ENCODE measurements at regions of chr7 and their contacts with region 1.

Region 1: DNA sequence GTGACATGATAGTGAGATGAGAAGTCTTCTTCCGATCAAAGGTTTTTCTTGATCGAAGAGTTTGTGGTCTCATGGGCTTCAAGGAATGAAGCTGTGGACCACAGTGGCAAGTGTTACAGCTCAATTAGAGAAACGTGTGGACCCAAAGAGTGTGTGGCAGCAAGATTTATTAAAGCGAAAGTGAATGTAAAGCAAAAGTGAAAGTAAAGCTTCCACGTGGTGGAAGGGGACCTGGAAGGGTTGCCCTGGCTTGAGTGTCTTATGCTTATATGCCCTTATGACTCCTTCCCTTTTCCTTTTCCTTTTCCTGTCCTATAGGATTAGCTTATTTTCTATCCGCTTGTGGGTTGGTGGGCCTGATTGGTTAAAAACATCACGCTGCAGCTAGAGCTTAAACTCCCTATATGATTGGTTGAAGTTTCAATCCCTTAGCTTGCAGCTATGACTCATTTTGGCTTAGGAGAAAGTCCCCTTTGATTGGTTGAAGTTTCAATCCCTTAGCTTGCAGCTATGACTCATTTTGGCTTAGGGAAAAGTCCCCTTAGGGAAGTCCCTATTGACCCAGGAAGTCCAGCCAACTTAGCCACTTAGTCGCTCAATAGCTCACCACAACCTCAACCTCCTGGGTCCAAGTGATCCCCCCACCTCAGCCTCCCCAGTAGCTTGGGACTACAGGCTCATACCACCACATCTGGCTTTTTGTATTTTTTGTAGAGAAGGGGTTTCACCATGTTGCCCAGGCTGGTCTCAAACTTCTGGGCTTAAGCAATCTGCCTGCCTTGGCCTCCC is 34.7 kb downstream of the MRPS24 start:
- DNase-seq: no peak
- ATAC-seq: no peak
- H3K4me3 ChIP-seq: peak overlapping the region in 2 of 3 experiments; percentile 8 to 40; a peak in 4 of 6 replicates
- H3K27ac ChIP-seq: no peak overlapping the region
- H3K4me1 ChIP-seq: peaks cover 23% of the 10 kb centered on the region
- H3K27me3 ChIP-seq: no peaks in the 10 kb centered on the region
- CTCF ChIP-seq: no peak
- EP300 ChIP-seq: no peak
- POLR2A ChIP-seq: no peak
- RAD21 ChIP-seq: no peak

Region 2: GRCh38 chr7:43700059-43700501 is 134.6 kb before region 1 on chr7:
- CTCF ChIA-PET with region 1: interaction called, 11 read pairs
- POLR2A ChIA-PET with region 1: no interaction called
- in situ Hi-C with region 1: no loop called
- intact Hi-C with region 1: loop called (anchors 2 kb)
- DNase-seq: peak; percentile 46
- ATAC-seq: 0 out of 3 replicates have a peak, but pooled peaks have one; percentile 38
- H3K4me3 ChIP-seq: no peak overlapping the region
- H3K27ac ChIP-seq: no peak overlapping the region
- H3K4me1 ChIP-seq: peaks cover 17% of the 10 kb centered on the region
- H3K27me3 ChIP-seq: no peaks in the 10 kb centered on the region
- CTCF ChIP-seq: peak; percentile 76
- EP300 ChIP-seq: no peak
- POLR2A ChIP-seq: no peak
- RAD21 ChIP-seq: peak; percentile 78

Region 3: GRCh38 chr7:43721193-43721806 is 113.4 kb before region 1 on chr7:
- CTCF ChIA-PET with region 1: interaction called, 13 read pairs
- POLR2A ChIA-PET with region 1: no interaction called
- in situ Hi-C with region 1: no loop called
- intact Hi-C with region 1: loop called (anchors 2 kb)
- DNase-seq: peak; percentile 39
- ATAC-seq: no peak
- H3K4me3 ChIP-seq: no peak overlapping the region
- H3K27ac ChIP-seq: no peak overlapping the region
- H3K4me1 ChIP-seq: peaks cover 12% of the 10 kb centered on the region
- H3K27me3 ChIP-seq: no peaks in the 10 kb centered on the region
- CTCF ChIP-seq: peak; percentile 55
- EP300 ChIP-seq: no peak
- POLR2A ChIP-seq: no peak
- RAD21 ChIP-seq: no peak

Region 4: GRCh38 chr7:43791665-43792064 is 43.0 kb before region 1 on chr7:
- CTCF ChIA-PET with region 1: no interaction called
- POLR2A ChIA-PET with region 1: no interaction called
- in situ Hi-C with region 1: no loop called
- intact Hi-C with region 1: no loop called
- DNase-seq: no peak
- ATAC-seq: no peak
- H3K4me3 ChIP-seq: no peak overlapping the region
- H3K27ac ChIP-seq: no peak overlapping the region
- H3K4me1 ChIP-seq: no peaks in the 10 kb centered on the region
- H3K27me3 ChIP-seq: no peaks in the 10 kb centered on the region
- CTCF ChIP-seq: no peak
- EP300 ChIP-seq: no peak
- POLR2A ChIP-seq: no peak
- RAD21 ChIP-seq: no peak

Region 5: DNA sequence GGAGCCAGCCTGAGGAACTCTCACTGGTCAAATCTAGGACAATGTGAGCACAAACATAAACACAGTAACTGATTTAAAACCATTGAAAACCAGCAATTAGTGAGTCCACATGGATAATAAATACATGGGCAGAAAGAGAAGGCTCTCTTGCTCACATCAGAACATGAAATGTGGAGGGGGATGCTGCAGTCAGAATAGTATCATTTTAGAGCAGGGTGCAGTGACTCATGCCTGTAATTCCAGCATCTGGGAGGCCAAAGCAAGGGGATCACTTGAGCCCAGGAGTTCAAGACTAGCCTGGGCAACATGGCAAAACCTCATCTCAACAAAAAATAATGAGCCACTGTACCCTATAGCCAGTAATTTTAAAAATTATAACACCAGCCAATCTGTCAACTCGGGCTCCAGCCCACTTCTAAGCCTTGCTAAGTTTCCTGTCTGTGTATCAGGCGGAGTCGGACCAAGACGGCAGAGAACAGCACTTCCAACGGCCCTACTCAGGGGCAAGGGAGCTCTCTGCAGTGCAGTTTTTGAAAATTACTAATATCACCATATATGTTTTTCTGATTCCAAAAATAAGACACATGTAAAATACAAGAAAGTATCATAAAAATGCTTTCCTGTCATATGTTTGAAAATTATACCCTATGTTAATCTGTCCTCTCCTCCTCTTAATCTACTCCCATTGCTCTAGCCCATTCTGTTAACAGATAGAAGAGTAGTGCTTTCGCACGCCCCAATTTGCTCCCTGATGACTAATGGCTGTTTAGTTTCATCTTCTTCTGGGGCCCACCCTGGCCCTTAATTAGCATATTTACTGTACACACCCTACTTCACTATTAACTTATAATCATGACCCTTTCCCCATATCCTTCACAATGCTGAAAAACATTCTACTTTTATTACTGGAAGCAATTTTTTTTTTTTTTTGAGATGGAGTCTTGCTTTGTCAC is 54.6 kb after region 1 on chr7:
- CTCF ChIA-PET with region 1: no interaction called
- POLR2A ChIA-PET with region 1: no interaction called
- in situ Hi-C with region 1: no loop called
- intact Hi-C with region 1: no loop called
- DNase-seq: no peak
- ATAC-seq: no peak
- H3K4me3 ChIP-seq: no peak overlapping the region
- H3K27ac ChIP-seq: no peak overlapping the region
- H3K4me1 ChIP-seq: no peaks in the 10 kb centered on the region
- H3K27me3 ChIP-seq: no peaks in the 10 kb centered on the region
- CTCF ChIP-seq: no peak
- EP300 ChIP-seq: no peak
- POLR2A ChIP-seq: no peak
- RAD21 ChIP-seq: no peak

Region 6: GRCh38 chr7:43954524-43955228 is 120.0 kb after region 1 on chr7:
- CTCF ChIA-PET with region 1: interaction called, 7 read pairs
- POLR2A ChIA-PET with region 1: no interaction called
- in situ Hi-C with region 1: no loop called
- intact Hi-C with region 1: loop called (anchors 1 kb)
- DNase-seq: peak; percentile 61
- ATAC-seq: peak; percentile 99
- H3K4me3 ChIP-seq: no peak overlapping the region
- H3K27ac ChIP-seq: no peak overlapping the region
- H3K4me1 ChIP-seq: no peaks in the 10 kb centered on the region
- H3K27me3 ChIP-seq: no peaks in the 10 kb centered on the region
- CTCF ChIP-seq: peak; percentile 75
- EP300 ChIP-seq: no peak
- POLR2A ChIP-seq: no peak
- RAD21 ChIP-seq: peak; percentile 46; the same call in 1 of the 2 replicates